Left colon (tissue), 2 donors: ENCODE measurements at regions of chr6 and their contacts with region 1.

Region 1: GRCh38 chr6:142146828-142147662 is at the starts of genes NMBR and VTA1:
- DNase-seq: peak; percentile 95 to 98
- ATAC-seq: peak; percentile 99
- total RNA-seq, gene NMBR: not detected
- total RNA-seq, gene VTA1: 48.9 to 52.0 TPM

Region 2: GRCh38 chr6:142207265-142207877 is 60.3 kb after region 1 on chr6:
- intact Hi-C with region 1: loop called in 1 of 2 experiments (anchors 5 kb)
- DNase-seq: peak in 1 of 2 donors; percentile 39
- ATAC-seq: peak; percentile 81